CD4-positive, alpha-beta T cell (primary cell): ENCODE measurements at regions of chr9 and their contacts with region 1.

Region 1: DNA sequence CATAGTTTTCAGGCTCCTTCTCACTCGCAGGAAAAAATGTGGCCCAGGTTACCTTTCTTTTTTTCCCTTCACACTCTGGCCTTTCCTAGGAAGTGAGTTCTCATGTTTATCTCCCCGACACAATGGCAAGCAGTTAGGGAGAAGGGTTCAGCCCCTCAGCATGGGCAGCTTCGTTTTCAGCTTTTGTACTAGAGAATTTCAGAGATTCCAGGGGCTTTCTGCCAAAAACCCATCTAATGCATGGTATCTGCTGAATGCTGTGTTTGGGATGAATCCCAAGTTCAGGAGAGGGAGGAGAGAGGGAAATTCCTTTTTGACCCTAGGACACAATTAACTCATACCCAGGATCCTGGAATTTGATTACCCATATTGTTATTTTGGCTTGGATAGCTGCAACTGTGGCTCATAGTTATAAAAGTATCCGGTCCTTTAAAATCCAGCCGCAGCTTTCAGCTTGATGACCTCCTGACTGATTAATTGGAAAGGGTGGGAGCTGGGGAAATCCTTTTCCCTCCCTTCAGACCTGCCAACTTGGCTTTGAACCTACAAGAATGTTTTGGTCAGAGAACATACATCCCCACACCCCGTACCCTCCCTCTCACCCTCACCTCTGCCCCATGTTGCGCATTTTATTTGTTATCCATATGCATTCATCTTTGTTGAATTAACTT is 78.4 kb downstream of the TMEM252 start:
- DNase-seq: no peak
- ATAC-seq: no peak
- H3K4me3 ChIP-seq: no peak overlapping the region
- H3K4me3 Mint-ChIP-seq: no peak overlapping the region
- H3K27ac ChIP-seq: no peak overlapping the region
- H3K27ac Mint-ChIP-seq: no peak overlapping the region
- H3K4me1 ChIP-seq: no peaks in the 10 kb centered on the region
- H3K4me1 Mint-ChIP-seq: no peaks in the 10 kb centered on the region
- H3K27me3 ChIP-seq: no peaks in the 10 kb centered on the region
- H3K27me3 Mint-ChIP-seq: peaks cover 6% of the 10 kb centered on the region
- CTCF ChIP-seq: no peak

Region 2: DNA sequence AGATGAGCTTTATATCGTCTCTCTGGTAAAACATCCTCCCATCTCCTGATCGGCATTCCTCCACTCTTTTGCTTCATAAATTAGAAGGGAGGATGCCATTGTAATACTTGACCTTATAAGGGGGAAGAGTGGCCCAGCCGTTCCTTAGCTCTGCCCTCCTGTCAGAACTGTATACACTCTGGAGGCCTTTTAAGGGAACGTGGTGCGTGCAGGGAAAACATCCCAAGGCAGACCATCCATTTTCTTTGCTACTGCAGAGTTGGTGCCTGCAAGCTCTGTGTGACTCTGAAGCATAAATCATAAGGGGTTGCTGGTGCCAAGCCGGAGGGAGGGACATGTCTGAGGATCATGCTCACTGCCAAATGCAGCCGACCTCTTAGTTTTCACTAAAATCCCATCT is 15.4 kb before region 1 on chr9:
- CTCF ChIA-PET with region 1: no interaction called
- POLR2A ChIA-PET with region 1: no interaction called
- intact Hi-C with region 1: no loop called
- DNase-seq: no peak
- ATAC-seq: no peak
- H3K4me3 ChIP-seq: no peak overlapping the region
- H3K4me3 Mint-ChIP-seq: no peak overlapping the region
- H3K27ac ChIP-seq: no peak overlapping the region
- H3K27ac Mint-ChIP-seq: no peak overlapping the region
- H3K4me1 ChIP-seq: no peaks in the 10 kb centered on the region
- H3K4me1 Mint-ChIP-seq: no peaks in the 10 kb centered on the region
- H3K27me3 ChIP-seq: no peaks in the 10 kb centered on the region
- H3K27me3 Mint-ChIP-seq: peaks cover 15% of the 10 kb centered on the region
- CTCF ChIP-seq: no peak

Region 3: GRCh38 chr9:68489646-68490045 is 27.4 kb after region 1 on chr9:
- CTCF ChIA-PET with region 1: no interaction called
- POLR2A ChIA-PET with region 1: no interaction called
- intact Hi-C with region 1: loop called in 1 of 2 experiments (anchors 2 kb)
- DNase-seq: no peak
- ATAC-seq: no peak
- H3K4me3 ChIP-seq: no peak overlapping the region
- H3K4me3 Mint-ChIP-seq: no peak overlapping the region
- H3K27ac ChIP-seq: no peak overlapping the region
- H3K27ac Mint-ChIP-seq: no peak overlapping the region
- H3K4me1 ChIP-seq: no peaks in the 10 kb centered on the region
- H3K4me1 Mint-ChIP-seq: no peaks in the 10 kb centered on the region
- H3K27me3 ChIP-seq: peaks cover 0 to 2% of the 10 kb centered on the region in 2 experiments
- H3K27me3 Mint-ChIP-seq: peaks cover 26% of the 10 kb centered on the region
- CTCF ChIP-seq: no peak